GM10248 (cell line): ENCODE measurements at regions of chr2 and their contacts with region 1.

Region 1: GRCh38 chr2:201071479-201072200 is at the starts of genes HYCC2 and NDUFB3:
- DNase-seq: peak; percentile 96
- CTCF ChIP-seq: peak; percentile 38

Region 2: GRCh38 chr2:200985799-200986198 is 85.8 kb before region 1 on chr2:
- CTCF ChIA-PET with region 1: interaction called, 10 read pairs
- POLR2A ChIA-PET with region 1: no interaction called
- DNase-seq: no peak
- CTCF ChIP-seq: no peak

Region 3: GRCh38 chr2:201024518-201024917 is 47.1 kb before region 1 on chr2:
- CTCF ChIA-PET with region 1: interaction called, 10 read pairs
- POLR2A ChIA-PET with region 1: no interaction called
- DNase-seq: no peak
- CTCF ChIP-seq: no peak

Region 4: DNA sequence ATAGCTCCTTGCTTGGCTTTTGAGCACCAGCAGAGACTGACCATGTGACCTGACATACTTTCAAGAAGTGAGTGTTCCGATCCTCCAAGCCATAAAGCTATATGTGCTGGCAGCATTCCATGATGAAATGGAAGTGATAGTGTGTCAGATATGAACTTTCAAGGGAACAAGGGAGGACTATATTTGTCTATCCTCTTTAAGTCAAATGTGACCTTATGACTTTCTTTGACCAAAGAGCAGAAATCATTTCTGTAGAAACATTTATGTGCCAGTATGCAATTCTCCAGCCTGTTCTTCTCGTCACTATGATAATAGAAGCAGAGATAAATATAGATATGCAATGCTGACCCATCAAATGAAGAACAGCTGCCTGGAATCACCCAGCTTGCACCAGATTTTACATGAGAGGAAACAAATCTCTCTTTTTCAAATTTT is 14.5 kb before region 1 on chr2:
- CTCF ChIA-PET with region 1: interaction called, 34 read pairs
- POLR2A ChIA-PET with region 1: no interaction called
- DNase-seq: no peak
- CTCF ChIP-seq: no peak

Region 5: DNA sequence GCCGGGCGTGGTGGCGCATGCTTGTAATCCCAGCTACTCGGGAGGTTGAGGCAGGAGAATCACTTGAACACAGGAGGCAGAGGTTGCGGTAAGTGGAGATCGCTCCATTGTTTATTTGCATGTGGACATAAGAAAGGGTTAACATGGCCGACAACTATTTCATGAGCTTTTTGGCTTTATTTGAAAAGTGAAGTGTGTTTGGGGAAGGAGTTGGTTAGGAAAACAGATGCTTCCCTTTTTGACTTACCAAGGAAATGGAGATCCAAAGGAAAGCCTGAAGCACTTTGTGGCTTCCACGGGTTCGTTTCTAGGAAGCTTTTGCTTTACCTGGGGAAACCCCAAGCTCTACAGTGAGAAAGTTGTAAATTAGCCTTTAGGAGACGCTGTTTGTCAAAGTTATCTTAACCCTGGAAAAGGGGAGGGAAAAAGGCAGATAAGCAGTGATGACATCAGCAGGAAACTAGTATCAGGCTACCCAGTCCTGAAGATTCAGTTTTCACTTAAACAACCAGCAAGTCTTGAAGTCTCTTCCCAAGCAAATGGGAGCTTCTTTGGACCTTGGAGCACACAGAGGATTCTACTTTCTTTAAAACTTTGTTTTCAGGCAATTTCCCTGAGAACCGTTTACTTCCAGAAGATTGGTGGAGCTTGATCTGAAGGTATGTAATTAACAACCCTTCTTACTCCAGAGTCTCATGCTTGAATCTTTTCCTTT is 111.2 kb after region 1 on chr2 and contains the start of gene CASP10:
- CTCF ChIA-PET with region 1: interaction called, 11 read pairs
- POLR2A ChIA-PET with region 1: no interaction called
- DNase-seq: peak; percentile 67
- CTCF ChIP-seq: peak; percentile 62

Region 6: GRCh38 chr2:201307876-201308275 is 236.2 kb after region 1 on chr2:
- CTCF ChIA-PET with region 1: no interaction called
- POLR2A ChIA-PET with region 1: no interaction called
- DNase-seq: no peak
- CTCF ChIP-seq: no peak

Region 7: GRCh38 chr2:201320701-201321100 is 249.1 kb after region 1 on chr2:
- CTCF ChIA-PET with region 1: no interaction called
- POLR2A ChIA-PET with region 1: no interaction called
- DNase-seq: no peak
- CTCF ChIP-seq: no peak